ENCODE measurements at regions of chr20 and their contacts with region 1.

Region 1: DNA sequence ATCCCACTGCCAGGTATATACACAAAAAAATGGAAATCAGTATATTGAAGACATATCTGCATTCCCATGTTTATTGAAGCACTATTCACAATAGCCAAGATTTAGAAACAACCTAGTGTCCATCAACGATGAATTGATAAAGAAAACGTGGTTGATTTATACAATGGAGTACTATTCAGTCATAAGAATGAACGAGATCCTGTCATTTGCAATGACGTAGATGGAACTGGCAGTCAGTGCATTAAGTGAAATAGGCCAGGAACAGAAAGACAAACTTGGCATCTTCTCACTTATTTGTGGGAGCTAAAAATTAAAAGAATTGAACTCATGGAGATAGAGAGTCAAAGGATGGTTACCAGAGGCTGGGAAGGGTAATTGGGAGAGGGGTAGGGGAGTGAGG is 21.4 kb upstream of the ELMO2 start:
- DNase-seq: no peak
- H3K4me3 Mint-ChIP-seq: no peak overlapping the region
- H3K27ac Mint-ChIP-seq: no peak overlapping the region
- H3K4me1 Mint-ChIP-seq: no peaks in the 10 kb centered on the region
- H3K27me3 Mint-ChIP-seq: peaks cover 94% of the 10 kb centered on the region
- CTCF ChIP-seq: no peak

Region 2: GRCh38 chr20:46438156-46438750 is 10.4 kb after region 1 on chr20:
- CTCF ChIA-PET with region 1: interaction called, 14 read pairs
- POLR2A ChIA-PET with region 1: interaction called, 5 read pairs
- intact Hi-C with region 1: no loop called
- DNase-seq: peak; percentile 41
- H3K4me3 Mint-ChIP-seq: no peak overlapping the region
- H3K27ac Mint-ChIP-seq: no peak overlapping the region
- H3K4me1 Mint-ChIP-seq: peaks cover 10% of the 10 kb centered on the region
- H3K27me3 Mint-ChIP-seq: peaks cover 55% of the 10 kb centered on the region
- CTCF ChIP-seq: peak; percentile 39